CD8-positive, alpha-beta T cell (primary cell): ENCODE measurements at regions of chr6 and their contacts with region 1.

Region 1: DNA sequence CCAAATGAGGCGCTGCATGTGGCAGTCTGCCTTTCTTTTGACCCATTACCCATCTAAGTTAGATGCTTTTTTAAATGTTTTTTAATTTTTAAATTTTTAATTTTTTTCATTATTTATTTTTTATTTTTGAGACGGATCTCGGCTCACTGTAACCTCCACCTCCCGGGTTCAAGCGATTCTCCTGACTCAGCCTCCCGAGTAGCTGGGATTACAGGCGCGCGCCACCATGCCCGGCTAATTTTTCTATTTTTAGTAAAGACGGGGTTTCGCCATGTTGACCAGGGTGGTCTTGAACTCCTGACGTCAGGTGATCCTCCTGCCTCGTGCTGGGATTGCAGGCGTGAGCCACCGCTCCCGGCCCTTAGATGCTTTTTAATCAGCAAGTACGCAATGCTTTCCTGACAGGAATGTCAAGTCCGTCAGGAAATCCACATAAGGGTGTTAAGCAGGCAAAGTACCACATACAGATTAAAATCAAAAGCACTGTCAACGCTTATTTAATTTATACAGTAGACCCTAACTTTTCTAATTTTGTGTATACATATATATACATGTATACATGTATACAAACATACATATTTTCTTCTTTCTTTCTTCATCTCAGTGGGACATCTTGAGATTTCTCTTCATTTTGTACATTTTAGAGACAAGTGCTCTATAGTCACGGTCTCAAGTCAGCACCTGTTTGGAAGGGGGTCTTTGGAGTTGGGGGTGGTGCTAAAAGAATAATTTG is 995 bp upstream of the GSTA4 start:
- DNase-seq: peak in 7 of 9 experiments; percentile 27 to 74 (median 54)
- ATAC-seq: peak; percentile 8
- H3K4me3 ChIP-seq: peak overlapping the region; percentile 41 to 75
- H3K4me3 Mint-ChIP-seq: peak overlapping the region; percentile 94
- H3K27ac ChIP-seq: peak overlapping the region; percentile 57 to 100
- H3K27ac Mint-ChIP-seq: peak overlapping the region; percentile 99
- H3K4me1 ChIP-seq: peaks cover 6% of the 10 kb centered on the region
- H3K4me1 Mint-ChIP-seq: peaks cover 22% of the 10 kb centered on the region
- H3K27me3 ChIP-seq: no peaks in the 10 kb centered on the region
- H3K27me3 Mint-ChIP-seq: peaks cover 7% of the 10 kb centered on the region
- CTCF ChIP-seq: no peak

Region 2: GRCh38 chr6:52670502-52671409 is 325.3 kb before region 1 on chr6 and contains the start of gene TMEM14A:
- CTCF ChIA-PET with region 1: no interaction called
- POLR2A ChIA-PET with region 1: no interaction called
- intact Hi-C with region 1: loop called (anchors 5 kb)
- DNase-seq: peak; percentile 75 to 96 (median 90)
- ATAC-seq: peak; percentile 97
- H3K4me3 ChIP-seq: peak within 1 kb of the TSS; percentile 78 to 83
- H3K4me3 Mint-ChIP-seq: peak within 1 kb of the TSS; percentile 90
- H3K27ac ChIP-seq: peak within 1 kb of the TSS; percentile 28 to 36
- H3K27ac Mint-ChIP-seq: peak within 1 kb of the TSS; percentile 81
- H3K4me1 ChIP-seq: peaks cover 13% of the 10 kb centered on the region
- H3K4me1 Mint-ChIP-seq: peaks cover 30% of the 10 kb centered on the region
- H3K27me3 ChIP-seq: no peaks in the 10 kb centered on the region
- H3K27me3 Mint-ChIP-seq: no peaks in the 10 kb centered on the region
- CTCF ChIP-seq: no peak
- total RNA-seq, gene TMEM14A: 1.7 to 1.8 TPM

Region 3: DNA sequence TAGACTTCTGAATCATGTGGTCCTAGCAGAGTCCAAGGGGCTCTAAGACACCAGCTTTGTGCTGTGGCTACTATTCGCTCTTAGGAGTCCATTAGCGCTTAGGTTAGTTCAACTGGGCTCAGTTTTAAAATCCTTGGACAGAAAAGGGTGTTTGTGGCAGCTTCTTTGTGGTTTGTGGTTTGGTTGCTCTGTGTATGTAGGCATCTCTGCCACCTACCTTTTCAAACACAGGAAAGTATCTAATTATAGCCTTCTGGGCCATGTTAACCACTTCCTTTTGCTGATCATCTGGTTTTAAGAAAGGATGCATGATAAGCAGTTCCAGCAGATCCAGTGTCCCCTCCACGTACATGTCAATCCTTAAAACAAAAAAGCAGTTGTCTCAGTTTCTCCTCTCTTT is 11.8 kb before region 1 on chr6:
- CTCF ChIA-PET with region 1: interaction called, 9 read pairs
- POLR2A ChIA-PET with region 1: interaction called, 11 read pairs
- intact Hi-C with region 1: loop called in 1 of 2 experiments (anchors 1 kb)
- DNase-seq: peak in 7 of 9 experiments; percentile 9 to 84 (median 49)
- ATAC-seq: peak; percentile 88
- H3K4me3 ChIP-seq: peak overlapping the region in 1 of 2 experiments; percentile 23
- H3K4me3 Mint-ChIP-seq: peak overlapping the region; percentile 67
- H3K27ac ChIP-seq: no peak overlapping the region
- H3K27ac Mint-ChIP-seq: no peak overlapping the region
- H3K4me1 ChIP-seq: peaks cover 29% of the 10 kb centered on the region
- H3K4me1 Mint-ChIP-seq: peaks cover 34% of the 10 kb centered on the region
- H3K27me3 ChIP-seq: peaks cover 0 to 3% of the 10 kb centered on the region in 2 experiments
- H3K27me3 Mint-ChIP-seq: peaks cover 37% of the 10 kb centered on the region
- CTCF ChIP-seq: no peak

Region 4: DNA sequence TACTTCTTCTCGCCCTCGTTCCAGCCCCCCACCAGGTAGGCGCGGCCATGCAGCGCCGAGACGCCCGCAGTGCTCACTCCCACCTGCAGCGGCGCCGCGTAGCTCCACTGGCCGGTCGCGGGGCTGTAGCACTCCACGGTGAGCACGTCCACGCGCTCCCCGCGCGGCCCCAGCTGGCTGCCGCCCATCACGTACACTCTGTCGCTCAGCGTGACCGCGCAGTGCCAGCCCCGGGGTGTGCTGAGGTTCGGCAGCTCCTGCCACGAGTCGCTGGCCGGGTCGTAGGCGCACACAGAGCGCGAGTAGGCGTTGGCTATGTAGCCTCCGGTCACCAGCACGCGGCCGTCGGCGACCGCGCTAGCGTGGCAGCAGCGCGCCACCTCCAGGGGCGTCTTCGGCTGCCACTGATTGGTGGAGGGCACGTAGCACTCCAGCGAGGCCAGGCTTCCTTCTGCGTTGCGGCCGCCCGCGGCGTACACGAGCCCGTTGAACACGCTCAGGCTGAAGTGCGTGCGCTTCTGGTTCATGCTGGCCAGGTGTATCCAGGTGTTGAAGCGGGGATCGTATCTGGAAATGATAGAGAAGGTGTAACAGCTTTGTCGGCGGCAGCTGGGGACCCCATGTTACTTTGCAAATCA is 655.8 kb after region 1 on chr6:
- CTCF ChIA-PET with region 1: no interaction called
- POLR2A ChIA-PET with region 1: no interaction called
- intact Hi-C with region 1: loop called (anchors 5 kb)
- DNase-seq: peak; percentile 57 to 91 (median 79)
- ATAC-seq: peak; percentile 86
- H3K4me3 ChIP-seq: peak overlapping the region; percentile 67 to 81
- H3K4me3 Mint-ChIP-seq: peak overlapping the region; percentile 91
- H3K27ac ChIP-seq: peak overlapping the region; percentile 54 to 65
- H3K27ac Mint-ChIP-seq: peak overlapping the region; percentile 89
- H3K4me1 ChIP-seq: peaks cover 32% of the 10 kb centered on the region
- H3K4me1 Mint-ChIP-seq: peaks cover 32% of the 10 kb centered on the region
- H3K27me3 ChIP-seq: no peaks in the 10 kb centered on the region
- H3K27me3 Mint-ChIP-seq: no peaks in the 10 kb centered on the region
- CTCF ChIP-seq: no peak